B cell (primary cell): ENCODE measurements at regions of chr11 and their contacts with region 1.

Region 1: GRCh38 chr11:33742249-33742851 is 6.1 kb upstream of the CD59 start:
- DNase-seq: peak; percentile 55
- ATAC-seq: peak; percentile 63
- H3K4me3 ChIP-seq: no peak overlapping the region
- H3K4me3 Mint-ChIP-seq: no peak overlapping the region
- H3K27ac ChIP-seq: no peak overlapping the region
- H3K27ac Mint-ChIP-seq: no peak overlapping the region
- H3K4me1 ChIP-seq: no peaks in the 10 kb centered on the region
- H3K4me1 Mint-ChIP-seq: no peaks in the 10 kb centered on the region
- H3K27me3 ChIP-seq: no peaks in the 10 kb centered on the region
- H3K27me3 Mint-ChIP-seq: no peaks in the 10 kb centered on the region
- CTCF ChIP-seq: peak; percentile 74

Region 2: DNA sequence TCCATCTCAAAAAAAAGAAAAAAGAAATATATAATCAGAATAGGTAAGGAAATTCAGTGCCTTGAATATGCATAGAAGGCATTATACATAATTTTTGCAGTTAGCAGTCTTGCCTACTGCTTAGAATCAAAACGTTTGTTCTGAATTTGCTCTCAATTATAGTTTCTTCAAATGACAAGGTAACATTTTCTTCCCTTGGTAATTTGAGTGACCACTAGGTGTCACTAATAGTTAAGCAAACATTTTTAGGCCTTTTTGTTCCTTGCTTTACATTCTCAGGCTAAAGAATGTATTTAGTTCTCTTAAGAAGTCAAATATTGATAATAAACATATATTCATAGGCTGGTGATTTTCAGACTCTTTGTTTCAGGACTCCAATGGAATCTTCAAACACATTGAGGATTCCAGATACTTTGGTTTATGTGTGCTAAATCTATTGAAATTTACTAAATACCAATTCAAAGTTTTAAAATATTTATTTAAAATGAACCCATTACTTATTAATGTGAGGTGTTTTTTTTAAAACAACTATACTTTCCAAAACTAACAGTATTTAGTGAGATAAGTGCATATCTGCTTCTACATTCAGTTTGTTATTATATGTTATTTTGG is 781.7 kb before region 1 on chr11:
- CTCF ChIA-PET with region 1: interaction called, 6 read pairs
- POLR2A ChIA-PET with region 1: no interaction called
- intact Hi-C with region 1: loop called (anchors 5 kb)
- DNase-seq: peak; percentile 59
- ATAC-seq: no peak
- H3K4me3 ChIP-seq: no peak overlapping the region
- H3K4me3 Mint-ChIP-seq: no peak overlapping the region
- H3K27ac ChIP-seq: no peak overlapping the region
- H3K27ac Mint-ChIP-seq: no peak overlapping the region
- H3K4me1 ChIP-seq: no peaks in the 10 kb centered on the region
- H3K4me1 Mint-ChIP-seq: no peaks in the 10 kb centered on the region
- H3K27me3 ChIP-seq: no peaks in the 10 kb centered on the region
- H3K27me3 Mint-ChIP-seq: no peaks in the 10 kb centered on the region
- CTCF ChIP-seq: peak; percentile 81

Region 3: GRCh38 chr11:33362051-33362910 is 380.1 kb before region 1 on chr11:
- CTCF ChIA-PET with region 1: interaction called, 115 read pairs
- POLR2A ChIA-PET with region 1: no interaction called
- intact Hi-C with region 1: loop called (anchors 1 kb)
- DNase-seq: peak; percentile 66
- ATAC-seq: peak; percentile 66
- H3K4me3 ChIP-seq: no peak overlapping the region
- H3K4me3 Mint-ChIP-seq: no peak overlapping the region
- H3K27ac ChIP-seq: no peak overlapping the region
- H3K27ac Mint-ChIP-seq: no peak overlapping the region
- H3K4me1 ChIP-seq: no peaks in the 10 kb centered on the region
- H3K4me1 Mint-ChIP-seq: no peaks in the 10 kb centered on the region
- H3K27me3 ChIP-seq: peaks cover 0 to 4% (median 0%) of the 10 kb centered on the region in 4 experiments
- H3K27me3 Mint-ChIP-seq: no peaks in the 10 kb centered on the region
- CTCF ChIP-seq: peak; percentile 83

Region 4: DNA sequence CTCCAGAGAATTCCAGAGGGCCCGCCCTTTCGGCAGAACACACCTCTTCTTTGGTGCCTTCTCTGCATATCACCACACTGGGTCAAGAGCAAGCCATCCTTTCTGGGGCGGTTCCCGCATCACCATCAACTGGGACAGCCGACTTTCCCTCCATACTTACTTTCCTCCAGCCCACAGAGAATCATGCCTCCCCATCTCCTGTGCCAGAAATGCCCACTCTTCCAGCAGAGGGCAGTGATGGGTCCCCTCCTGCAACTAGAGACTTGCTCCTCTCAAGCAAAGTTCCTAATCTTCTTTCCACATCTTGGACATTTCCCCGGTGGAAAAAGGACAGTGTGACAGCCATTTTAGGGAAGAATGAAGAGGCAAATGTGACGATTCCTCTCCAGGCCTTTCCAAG is 199.4 kb before region 1 on chr11:
- CTCF ChIA-PET with region 1: interaction called, 61 read pairs
- POLR2A ChIA-PET with region 1: no interaction called
- intact Hi-C with region 1: no loop called
- DNase-seq: peak; percentile 47
- ATAC-seq: no peak
- H3K4me3 ChIP-seq: no peak overlapping the region
- H3K4me3 Mint-ChIP-seq: no peak overlapping the region
- H3K27ac ChIP-seq: no peak overlapping the region
- H3K27ac Mint-ChIP-seq: no peak overlapping the region
- H3K4me1 ChIP-seq: no peaks in the 10 kb centered on the region
- H3K4me1 Mint-ChIP-seq: no peaks in the 10 kb centered on the region
- H3K27me3 ChIP-seq: peaks cover 0 to 8% (median 3%) of the 10 kb centered on the region in 4 experiments
- H3K27me3 Mint-ChIP-seq: peaks cover 36% of the 10 kb centered on the region
- CTCF ChIP-seq: peak; percentile 64

Region 5: GRCh38 chr11:33716236-33716635 is 26.1 kb before region 1 on chr11:
- CTCF ChIA-PET with region 1: interaction called, 71 read pairs
- POLR2A ChIA-PET with region 1: no interaction called
- intact Hi-C with region 1: loop called (anchors 1 kb)
- DNase-seq: no peak
- ATAC-seq: no peak
- H3K4me3 ChIP-seq: no peak overlapping the region
- H3K4me3 Mint-ChIP-seq: no peak overlapping the region
- H3K27ac ChIP-seq: no peak overlapping the region
- H3K27ac Mint-ChIP-seq: no peak overlapping the region
- H3K4me1 ChIP-seq: no peaks in the 10 kb centered on the region
- H3K4me1 Mint-ChIP-seq: no peaks in the 10 kb centered on the region
- H3K27me3 ChIP-seq: no peaks in the 10 kb centered on the region
- H3K27me3 Mint-ChIP-seq: no peaks in the 10 kb centered on the region
- CTCF ChIP-seq: no peak

Region 6: DNA sequence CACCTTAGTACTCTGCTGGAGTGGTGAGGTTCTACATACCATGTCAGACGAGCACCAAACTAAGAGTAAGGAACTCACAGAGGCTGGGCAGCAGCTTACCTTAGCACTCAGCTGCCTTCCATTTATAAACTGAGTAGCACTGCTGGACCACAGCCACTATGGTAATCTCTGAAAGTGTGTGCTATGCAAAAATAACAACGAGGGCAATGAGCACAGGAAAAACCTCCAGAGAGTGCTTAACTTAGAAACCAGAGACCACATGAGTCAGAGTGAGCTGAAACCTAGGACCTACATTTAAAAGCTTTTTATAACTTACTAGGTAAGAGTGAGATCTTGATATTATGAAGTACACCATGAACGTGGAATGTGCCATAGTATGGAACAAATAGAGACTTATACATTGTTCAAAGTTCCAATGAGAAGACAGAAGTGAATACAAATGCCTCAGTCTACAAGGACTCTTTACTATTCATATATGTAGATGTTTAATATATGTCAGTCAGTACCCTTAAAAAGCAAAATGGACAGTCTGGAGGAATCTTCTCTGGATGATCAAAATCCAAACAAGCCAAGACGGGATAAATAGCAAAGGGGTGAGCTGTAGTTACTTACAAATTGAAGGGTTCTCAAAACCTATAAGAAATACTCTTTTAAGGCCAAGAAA is 11.1 kb after region 1 on chr11:
- CTCF ChIA-PET with region 1: interaction called, 20 read pairs
- POLR2A ChIA-PET with region 1: no interaction called
- intact Hi-C with region 1: no loop called
- DNase-seq: no peak
- ATAC-seq: no peak
- H3K4me3 ChIP-seq: no peak overlapping the region
- H3K4me3 Mint-ChIP-seq: no peak overlapping the region
- H3K27ac ChIP-seq: no peak overlapping the region
- H3K27ac Mint-ChIP-seq: no peak overlapping the region
- H3K4me1 ChIP-seq: no peaks in the 10 kb centered on the region
- H3K4me1 Mint-ChIP-seq: no peaks in the 10 kb centered on the region
- H3K27me3 ChIP-seq: no peaks in the 10 kb centered on the region
- H3K27me3 Mint-ChIP-seq: no peaks in the 10 kb centered on the region
- CTCF ChIP-seq: no peak

Region 7: GRCh38 chr11:33802414-33802950 is 60.1 kb after region 1 on chr11:
- CTCF ChIA-PET with region 1: no interaction called
- POLR2A ChIA-PET with region 1: no interaction called
- intact Hi-C with region 1: no loop called
- DNase-seq: no peak
- ATAC-seq: no peak
- H3K4me3 ChIP-seq: no peak overlapping the region
- H3K4me3 Mint-ChIP-seq: no peak overlapping the region
- H3K27ac ChIP-seq: no peak overlapping the region
- H3K27ac Mint-ChIP-seq: no peak overlapping the region
- H3K4me1 ChIP-seq: no peaks in the 10 kb centered on the region
- H3K4me1 Mint-ChIP-seq: peaks cover 3% of the 10 kb centered on the region
- H3K27me3 ChIP-seq: peaks cover 0 to 37% (median 21%) of the 10 kb centered on the region in 4 experiments
- H3K27me3 Mint-ChIP-seq: peaks cover 53% of the 10 kb centered on the region
- CTCF ChIP-seq: no peak

Region 8: GRCh38 chr11:34021977-34022735 is 279.8 kb after region 1 on chr11:
- CTCF ChIA-PET with region 1: no interaction called
- POLR2A ChIA-PET with region 1: no interaction called
- intact Hi-C with region 1: no loop called
- DNase-seq: no peak
- ATAC-seq: no peak
- H3K4me3 ChIP-seq: no peak overlapping the region
- H3K4me3 Mint-ChIP-seq: no peak overlapping the region
- H3K27ac ChIP-seq: no peak overlapping the region
- H3K27ac Mint-ChIP-seq: no peak overlapping the region
- H3K4me1 ChIP-seq: no peaks in the 10 kb centered on the region
- H3K4me1 Mint-ChIP-seq: no peaks in the 10 kb centered on the region
- H3K27me3 ChIP-seq: peaks cover 0 to 3% (median 0%) of the 10 kb centered on the region in 4 experiments
- H3K27me3 Mint-ChIP-seq: peaks cover 3% of the 10 kb centered on the region
- CTCF ChIP-seq: no peak